ENCODE measurements at regions of chr16 and their contacts with region 1.

Region 1: GRCh38 chr16:82263521-82264143 is 93.6 kb upstream of the MPHOSPH6 start:
- DNase-seq: peak; percentile 12 to 49 (median 39)
- H3K4me3 ChIP-seq: no peak overlapping the region
- H3K4me3 Mint-ChIP-seq: no peak overlapping the region
- H3K27ac ChIP-seq: no peak overlapping the region
- H3K27ac Mint-ChIP-seq: no peak overlapping the region
- H3K4me1 ChIP-seq: no peaks in the 10 kb centered on the region
- H3K4me1 Mint-ChIP-seq: no peaks in the 10 kb centered on the region
- H3K27me3 ChIP-seq: peaks cover 0 to 2% of the 10 kb centered on the region in 2 donors
- H3K27me3 Mint-ChIP-seq: peaks cover 8 to 9% (median 9%) of the 10 kb centered on the region in 3 donors
- CTCF ChIP-seq: peak; percentile 94

Region 2: DNA sequence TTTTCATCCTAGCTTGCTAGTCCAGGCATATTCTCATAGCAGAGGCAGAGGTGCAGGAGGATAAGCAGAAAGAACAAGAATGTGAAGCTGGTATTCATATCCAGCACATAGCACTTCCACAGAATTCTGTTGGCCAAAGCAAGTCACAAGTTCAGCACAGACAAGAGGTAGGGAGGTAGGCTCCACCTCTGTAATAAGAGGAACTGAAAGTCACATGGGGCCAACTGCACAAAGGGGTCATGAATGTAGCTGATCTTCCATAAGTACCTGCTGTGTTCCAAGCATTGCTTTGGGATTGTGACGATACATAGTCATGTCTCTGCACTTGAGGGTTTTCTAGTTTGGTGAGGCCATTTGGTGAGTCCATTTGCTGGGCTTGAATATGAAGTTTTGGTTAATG is 17.2 kb after region 1 on chr16:
- intact Hi-C with region 1: no loop called
- DNase-seq: no peak
- H3K4me3 ChIP-seq: no peak overlapping the region
- H3K4me3 Mint-ChIP-seq: no peak overlapping the region
- H3K27ac ChIP-seq: no peak overlapping the region
- H3K27ac Mint-ChIP-seq: peak overlapping the region in 1 of 7 donors; percentile 28
- H3K4me1 ChIP-seq: no peaks in the 10 kb centered on the region
- H3K4me1 Mint-ChIP-seq: peaks cover 6% of the 10 kb centered on the region
- H3K27me3 ChIP-seq: no peaks in the 10 kb centered on the region
- H3K27me3 Mint-ChIP-seq: peaks cover 2 to 8% (median 5%) of the 10 kb centered on the region in 3 donors
- CTCF ChIP-seq: no peak

Region 3: DNA sequence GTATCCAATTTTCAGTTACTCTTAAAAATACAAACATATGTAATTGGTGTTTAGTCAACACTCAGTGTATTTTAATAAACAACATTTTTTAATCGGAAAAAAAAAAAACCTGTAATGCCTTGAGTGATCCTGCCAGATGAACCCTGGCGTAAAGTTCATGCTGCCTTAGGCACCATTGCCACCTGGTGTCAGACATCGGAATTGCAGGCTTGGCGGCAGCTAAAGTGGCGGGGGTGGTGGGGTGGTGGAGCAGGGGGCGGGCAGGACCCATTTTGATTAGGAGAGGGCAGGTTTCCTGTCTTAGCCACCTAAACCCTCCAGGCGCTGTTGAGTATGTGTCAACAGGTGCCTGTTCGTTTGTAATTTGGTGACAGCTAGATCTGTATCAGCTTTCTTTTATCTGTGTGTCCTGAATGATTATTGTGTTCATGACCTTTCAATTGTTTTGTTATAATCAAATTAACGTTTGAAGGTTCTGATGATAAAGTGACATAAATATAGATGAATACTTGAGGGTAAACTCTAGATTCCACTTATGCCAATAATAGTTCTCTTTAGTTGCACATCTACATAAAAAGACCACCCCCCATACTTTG is 951.9 kb after region 1 on chr16:
- intact Hi-C with region 1: loop called in 1 of 2 experiments (anchors 10 kb)
- DNase-seq: peak in 1 of 3 donors; percentile 8
- H3K4me3 ChIP-seq: no peak overlapping the region
- H3K4me3 Mint-ChIP-seq: no peak overlapping the region
- H3K27ac ChIP-seq: no peak overlapping the region
- H3K27ac Mint-ChIP-seq: no peak overlapping the region
- H3K4me1 ChIP-seq: no peaks in the 10 kb centered on the region
- H3K4me1 Mint-ChIP-seq: no peaks in the 10 kb centered on the region
- H3K27me3 ChIP-seq: no peaks in the 10 kb centered on the region
- H3K27me3 Mint-ChIP-seq: peaks cover 7 to 15% (median 10%) of the 10 kb centered on the region in 3 donors
- CTCF ChIP-seq: peak; percentile 71

Measured in CD14-positive monocyte (primary cell).